ENCODE measurements at regions of chr12 and their contacts with region 1.

Region 1: DNA sequence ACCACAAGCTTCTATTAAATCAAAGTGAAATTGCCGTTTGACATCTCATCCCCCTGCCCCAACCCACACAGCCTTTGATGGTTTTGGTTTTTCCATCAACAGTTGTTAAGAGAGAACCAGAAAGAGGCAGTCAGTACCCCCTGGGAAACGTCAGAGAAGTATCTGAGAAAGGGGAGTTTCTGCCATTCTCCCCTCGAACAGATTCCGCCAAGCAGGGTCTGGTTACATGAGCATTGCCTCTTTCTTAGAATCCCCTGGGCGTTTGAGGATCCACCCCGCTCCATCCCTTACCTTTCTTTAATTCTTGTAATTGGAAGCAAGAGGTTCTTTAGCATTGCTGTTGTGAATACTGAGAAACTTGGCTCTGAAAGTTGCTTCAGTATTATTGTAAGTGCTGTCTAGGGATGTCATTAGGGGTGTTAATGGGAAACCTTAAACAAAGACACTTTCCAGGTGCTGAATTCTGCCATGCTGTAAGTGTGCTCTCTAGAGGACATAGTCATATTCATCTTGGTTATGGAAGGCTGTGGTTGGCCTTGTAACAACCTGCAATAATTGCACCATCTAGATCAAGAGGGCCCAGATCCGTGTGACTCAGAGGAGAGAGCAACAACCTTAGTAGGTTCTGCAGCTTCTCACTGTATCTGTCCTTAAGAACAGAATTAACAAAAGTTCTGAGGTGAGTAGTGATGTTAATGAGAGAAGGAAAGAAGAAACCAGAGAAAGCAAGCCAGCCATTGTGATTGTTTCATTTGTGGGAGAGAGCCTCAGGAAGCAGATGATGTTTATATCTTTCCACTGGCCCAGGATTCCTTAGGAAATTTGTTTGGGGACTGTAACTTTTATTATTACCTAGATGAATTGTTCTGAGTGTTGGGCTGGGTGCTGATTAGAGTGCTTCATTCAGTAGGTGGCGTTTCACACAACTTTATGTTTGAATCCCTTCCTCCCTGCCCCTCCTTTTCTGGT is 9.0 kb downstream of the TMBIM6 start:
- DNase-seq: peak; percentile 90
- H3K4me3 ChIP-seq: peak overlapping the region in 1 of 3 experiments; percentile 19
- H3K27ac ChIP-seq: peak overlapping the region; percentile 54
- H3K4me1 ChIP-seq: peaks cover 21% of the 10 kb centered on the region
- H3K27me3 ChIP-seq: no peaks in the 10 kb centered on the region
- CTCF ChIP-seq: peak; percentile 14 to 40

Region 2: GRCh38 chr12:49636979-49637755 is 113.1 kb before region 1 on chr12:
- CTCF ChIA-PET with region 1: no interaction called
- dilution Hi-C with region 1: no loop called
- in situ Hi-C with region 1: no loop called
- intact Hi-C with region 1: loop called (anchors 2 kb)
- DNase-seq: peak; percentile 46
- H3K4me3 ChIP-seq: no peak overlapping the region
- H3K27ac ChIP-seq: no peak overlapping the region
- H3K4me1 ChIP-seq: no peaks in the 10 kb centered on the region
- H3K27me3 ChIP-seq: no peaks in the 10 kb centered on the region
- CTCF ChIP-seq: peak; percentile 79 to 90

Region 3: DNA sequence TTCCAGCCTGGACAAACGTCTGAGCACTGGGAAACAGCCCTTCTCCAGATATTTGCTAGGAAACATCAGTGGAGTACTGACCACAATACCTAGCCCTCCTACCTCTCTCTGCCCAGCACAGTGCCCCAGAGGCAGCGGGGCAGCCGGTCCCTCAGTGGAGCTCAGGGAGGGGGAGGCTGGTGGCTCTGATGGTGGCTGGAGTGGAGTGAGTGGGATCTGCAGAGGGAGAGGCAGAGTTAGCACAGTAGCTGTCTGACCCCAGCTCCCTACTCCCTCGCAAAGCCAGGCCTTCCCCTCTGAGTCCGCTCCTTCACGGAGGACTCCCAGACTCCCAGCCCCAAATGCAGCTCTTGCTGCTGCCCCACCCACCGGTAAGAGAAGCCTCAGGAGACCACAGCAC is 47.9 kb after region 1 on chr12:
- CTCF ChIA-PET with region 1: no interaction called
- dilution Hi-C with region 1: no loop called
- in situ Hi-C with region 1: no loop called
- intact Hi-C with region 1: no loop called
- DNase-seq: no peak
- H3K4me3 ChIP-seq: no peak overlapping the region
- H3K27ac ChIP-seq: no peak overlapping the region
- H3K4me1 ChIP-seq: no peaks in the 10 kb centered on the region
- H3K27me3 ChIP-seq: no peaks in the 10 kb centered on the region
- CTCF ChIP-seq: no peak

Region 4: GRCh38 chr12:49828133-49829091 is 78.1 kb after region 1 on chr12 and contains the start of gene NCKAP5L:
- CTCF ChIA-PET with region 1: no interaction called
- dilution Hi-C with region 1: no loop called
- in situ Hi-C with region 1: no loop called
- intact Hi-C with region 1: no loop called
- DNase-seq: peak; percentile 96
- H3K4me3 ChIP-seq: peak within 1 kb of the TSS; percentile 58 to 82 (median 76)
- H3K27ac ChIP-seq: peak within 1 kb of the TSS; percentile 65
- H3K4me1 ChIP-seq: peaks cover 45% of the 10 kb centered on the region
- H3K27me3 ChIP-seq: no peaks in the 10 kb centered on the region
- CTCF ChIP-seq: no peak
- total RNA-seq, gene NCKAP5L: 24.1 to 27.2 TPM